Activated T-helper 1 cell treated with anti-CD3 and anti-CD28 coated beads, Interleukin-12 subunit alpha, Interleukin-12 subunit beta, Interleukin-2, Interleukin-4 antibody, amounts not matched to agents 30 ng/mL and 10 ng/mL and 1 ng/mL, durations not matched to agents 14 hours and 24 hours and 36 hours (primary cell): ENCODE measurements at regions of chr20 and their contacts with region 1.

Region 1: GRCh38 chr20:32902456-32903420 is 44.0 kb downstream of the EFCAB8 start:
- DNase-seq: peak; percentile 52
- H3K4me3 Mint-ChIP-seq: no peak overlapping the region
- H3K27ac Mint-ChIP-seq: no peak overlapping the region
- H3K4me1 Mint-ChIP-seq: no peaks in the 10 kb centered on the region
- H3K27me3 Mint-ChIP-seq: no peaks in the 10 kb centered on the region

Region 2: DNA sequence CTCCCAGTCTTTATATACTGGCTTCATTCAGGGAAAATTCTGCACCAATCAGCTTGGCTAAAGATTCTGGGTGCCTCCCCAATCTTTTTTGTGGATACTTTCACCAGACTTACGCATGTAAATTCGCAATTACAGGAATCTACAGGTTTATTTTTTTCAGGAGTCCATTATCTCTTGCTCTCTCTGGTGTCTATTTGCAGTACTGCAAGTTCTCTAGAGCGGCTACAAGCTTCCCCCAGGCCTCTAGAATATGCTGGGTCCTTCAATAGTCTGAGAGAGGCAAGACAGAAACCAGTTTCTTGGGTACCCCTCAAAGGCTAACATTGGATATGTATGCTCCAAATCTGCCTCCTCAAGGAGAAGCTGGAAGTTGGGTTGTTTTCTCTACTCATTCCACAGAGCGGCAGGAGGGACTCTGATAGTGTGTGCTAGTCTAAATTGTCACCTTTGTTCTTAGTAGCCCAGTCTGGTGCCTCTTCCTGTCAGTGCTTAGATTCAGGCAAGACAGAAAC is 43.0 kb after region 1 on chr20:
- intact Hi-C with region 1: loop called (anchors 1 kb)
- DNase-seq: no peak
- H3K4me3 Mint-ChIP-seq: no peak overlapping the region
- H3K27ac Mint-ChIP-seq: peak overlapping the region; percentile 20
- H3K4me1 Mint-ChIP-seq: peaks cover 27% of the 10 kb centered on the region
- H3K27me3 Mint-ChIP-seq: peaks cover 4% of the 10 kb centered on the region

Region 3: GRCh38 chr20:33005132-33005566 is 102.4 kb after region 1 on chr20:
- intact Hi-C with region 1: loop called (anchors 1 kb)
- DNase-seq: peak; percentile 5
- H3K4me3 Mint-ChIP-seq: no peak overlapping the region
- H3K27ac Mint-ChIP-seq: no peak overlapping the region
- H3K4me1 Mint-ChIP-seq: no peaks in the 10 kb centered on the region
- H3K27me3 Mint-ChIP-seq: no peaks in the 10 kb centered on the region

Region 4: GRCh38 chr20:33097001-33097400 is 194.3 kb after region 1 on chr20:
- intact Hi-C with region 1: loop called (anchors 1 kb)
- DNase-seq: no peak
- H3K4me3 Mint-ChIP-seq: no peak overlapping the region
- H3K27ac Mint-ChIP-seq: no peak overlapping the region
- H3K4me1 Mint-ChIP-seq: no peaks in the 10 kb centered on the region
- H3K27me3 Mint-ChIP-seq: no peaks in the 10 kb centered on the region

Region 5: DNA sequence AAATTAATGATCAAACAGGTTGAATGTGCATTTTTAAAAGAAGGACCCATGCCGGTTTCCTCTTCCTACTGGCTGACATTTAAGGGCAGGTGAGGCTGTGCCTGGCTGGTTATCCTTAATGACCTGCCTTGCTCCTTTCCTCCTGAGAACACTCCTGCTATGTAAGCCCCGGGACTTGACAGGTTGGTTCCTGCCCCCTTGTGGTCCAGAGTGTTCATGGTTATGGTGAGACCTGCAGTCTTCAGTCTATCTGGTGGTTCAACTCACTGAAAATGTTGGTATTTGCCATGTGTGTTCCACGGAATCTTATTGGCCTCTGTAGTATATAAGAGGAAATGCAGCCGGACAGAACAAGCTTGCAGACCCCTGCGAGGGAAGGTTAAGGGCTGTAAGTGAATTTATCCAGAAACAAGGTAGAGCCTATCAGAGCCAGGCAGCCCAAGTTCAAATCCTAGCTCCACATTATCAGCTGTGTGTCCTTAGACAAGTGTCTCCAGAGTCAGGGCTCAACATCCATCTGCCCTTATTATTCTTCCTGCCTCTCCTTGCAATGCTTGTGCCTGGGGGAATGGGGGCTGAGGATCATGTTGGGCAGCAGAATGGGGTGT is 309.2 kb after region 1 on chr20:
- intact Hi-C with region 1: loop called (anchors 5 kb)
- DNase-seq: peak; percentile 5
- H3K4me3 Mint-ChIP-seq: no peak overlapping the region
- H3K27ac Mint-ChIP-seq: no peak overlapping the region
- H3K4me1 Mint-ChIP-seq: peaks cover 6% of the 10 kb centered on the region
- H3K27me3 Mint-ChIP-seq: peaks cover 22% of the 10 kb centered on the region

Region 6: GRCh38 chr20:33291830-33292355 is 389.2 kb after region 1 on chr20:
- intact Hi-C with region 1: loop called (anchors 1 kb)
- DNase-seq: peak; percentile 42
- H3K4me3 Mint-ChIP-seq: no peak overlapping the region
- H3K27ac Mint-ChIP-seq: no peak overlapping the region
- H3K4me1 Mint-ChIP-seq: no peaks in the 10 kb centered on the region
- H3K27me3 Mint-ChIP-seq: peaks cover 9% of the 10 kb centered on the region